CD14-positive monocyte (primary cell): ENCODE measurements at regions of chr1 and their contacts with region 1.

Region 1: DNA sequence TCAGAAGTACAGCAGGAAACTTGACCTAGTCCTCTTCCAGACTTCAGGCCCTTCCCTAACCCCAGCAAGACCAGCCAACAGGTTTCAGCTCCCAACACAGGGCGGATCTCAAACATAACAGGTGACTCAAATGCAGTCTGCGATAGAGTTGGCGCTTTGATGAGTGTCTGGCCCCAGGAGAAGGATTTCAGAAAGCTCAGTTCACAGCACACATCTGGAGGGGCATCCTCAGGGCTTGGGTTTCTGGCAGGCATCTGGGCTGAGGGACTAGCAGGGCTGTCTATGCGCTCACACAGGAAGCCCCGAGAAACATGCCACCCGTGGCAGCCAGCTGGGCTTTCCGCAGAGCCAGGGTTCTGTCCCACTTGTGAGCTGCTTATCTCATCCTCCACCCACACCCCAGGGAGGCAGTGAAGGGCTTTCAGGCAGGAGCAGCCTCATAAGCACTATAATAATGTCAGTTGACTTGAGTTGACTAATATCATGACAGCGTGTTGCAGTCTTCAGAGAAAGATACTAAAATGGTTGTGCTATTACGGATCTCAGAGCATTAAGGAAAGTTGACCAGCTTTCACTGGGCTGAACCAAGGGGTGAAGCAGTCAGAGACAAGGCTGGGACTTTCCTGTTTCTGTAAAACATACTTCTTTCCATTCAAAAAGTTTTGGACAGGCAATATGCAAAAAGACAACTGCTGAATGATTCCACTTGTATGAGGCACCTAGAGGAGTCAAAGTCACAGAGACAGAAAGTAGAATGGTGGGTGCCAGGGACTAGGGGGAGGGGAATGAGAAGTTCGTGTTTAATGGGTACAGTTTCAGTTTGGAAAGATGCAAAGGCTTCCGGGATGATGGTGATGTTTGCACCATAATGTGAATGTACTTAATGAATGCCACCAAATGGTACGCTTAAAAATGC is 233.0 kb upstream of the IRF2BP2 start:
- DNase-seq: peak in 2 of 3 donors; percentile 44 to 79
- H3K4me3 ChIP-seq: peak overlapping the region in 1 of 3 experiments; percentile 41
- H3K4me3 Mint-ChIP-seq: peak overlapping the region; percentile 64 to 65
- H3K27ac ChIP-seq: peak overlapping the region; percentile 98 to 100
- H3K27ac Mint-ChIP-seq: peak overlapping the region; percentile 97 to 99 (median 98)
- H3K4me1 ChIP-seq: peaks cover 78 to 91% of the 10 kb centered on the region in 2 donors
- H3K4me1 Mint-ChIP-seq: peaks cover 95% of the 10 kb centered on the region
- H3K27me3 ChIP-seq: no peaks in the 10 kb centered on the region
- H3K27me3 Mint-ChIP-seq: no peaks in the 10 kb centered on the region
- CTCF ChIP-seq: no peak

Region 2: GRCh38 chr1:234772345-234773147 is 70.4 kb before region 1 on chr1:
- intact Hi-C with region 1: loop called (anchors 2 kb)
- DNase-seq: peak; percentile 98 to 100 (median 99)
- H3K4me3 ChIP-seq: peak overlapping the region in 1 of 3 experiments; percentile 17
- H3K4me3 Mint-ChIP-seq: peak overlapping the region; percentile 52 to 75
- H3K27ac ChIP-seq: peak overlapping the region; percentile 94 to 98
- H3K27ac Mint-ChIP-seq: peak overlapping the region in 4 of 7 donors; percentile 96 to 100 (median 99)
- H3K4me1 ChIP-seq: peaks cover 88 to 92% of the 10 kb centered on the region in 2 donors
- H3K4me1 Mint-ChIP-seq: peaks cover 51% of the 10 kb centered on the region
- H3K27me3 ChIP-seq: no peaks in the 10 kb centered on the region
- H3K27me3 Mint-ChIP-seq: no peaks in the 10 kb centered on the region
- CTCF ChIP-seq: no peak

Region 3: GRCh38 chr1:234881893-234882771 is 39.1 kb after region 1 on chr1:
- intact Hi-C with region 1: loop called in 1 of 2 experiments (anchors 5 kb)
- DNase-seq: no peak
- H3K4me3 ChIP-seq: no peak overlapping the region
- H3K4me3 Mint-ChIP-seq: no peak overlapping the region
- H3K27ac ChIP-seq: no peak overlapping the region
- H3K27ac Mint-ChIP-seq: peak overlapping the region in 4 of 7 donors; percentile 19 to 35 (median 26)
- H3K4me1 ChIP-seq: peaks cover 46 to 82% of the 10 kb centered on the region in 2 donors
- H3K4me1 Mint-ChIP-seq: peaks cover 65% of the 10 kb centered on the region
- H3K27me3 ChIP-seq: no peaks in the 10 kb centered on the region
- H3K27me3 Mint-ChIP-seq: peaks cover 0 to 4% (median 4%) of the 10 kb centered on the region in 3 donors
- CTCF ChIP-seq: no peak

Region 4: GRCh38 chr1:235067263-235068172 is 224.5 kb after region 1 on chr1:
- intact Hi-C with region 1: loop called in 1 of 2 experiments (anchors 5 kb)
- DNase-seq: peak; percentile 84 to 93 (median 89)
- H3K4me3 ChIP-seq: no peak overlapping the region
- H3K4me3 Mint-ChIP-seq: peak overlapping the region; percentile 19 to 66
- H3K27ac ChIP-seq: peak overlapping the region in 1 of 2 donors; percentile 66
- H3K27ac Mint-ChIP-seq: peak overlapping the region; percentile 70 to 96 (median 81)
- H3K4me1 ChIP-seq: peaks cover 29 to 39% of the 10 kb centered on the region in 2 donors
- H3K4me1 Mint-ChIP-seq: peaks cover 51% of the 10 kb centered on the region
- H3K27me3 ChIP-seq: no peaks in the 10 kb centered on the region
- H3K27me3 Mint-ChIP-seq: peaks cover 0 to 5% (median 1%) of the 10 kb centered on the region in 3 donors
- CTCF ChIP-seq: no peak